ENCODE measurements at regions of chr11 and their contacts with region 1.

Region 1: GRCh38 chr11:72085621-72086351 is 5.1 kb downstream of the LRRC51 start:
- DNase-seq: no peak
- H3K4me3 ChIP-seq: no peak overlapping the region
- H3K27ac ChIP-seq: no peak overlapping the region
- H3K4me1 ChIP-seq: no peaks in the 10 kb centered on the region
- H3K27me3 ChIP-seq: no peaks in the 10 kb centered on the region
- CTCF ChIP-seq: no peak
- POLR2A ChIP-seq: no peak

Region 2: GRCh38 chr11:72024069-72024754 is 61.6 kb before region 1 on chr11:
- intact Hi-C with region 1: loop called (anchors 5 kb)
- DNase-seq: no peak
- H3K4me3 ChIP-seq: no peak overlapping the region
- H3K27ac ChIP-seq: peak overlapping the region; percentile 71 to 74
- H3K4me1 ChIP-seq: peaks cover 13 to 23% of the 10 kb centered on the region in 2 donors
- H3K27me3 ChIP-seq: no peaks in the 10 kb centered on the region
- CTCF ChIP-seq: no peak
- POLR2A ChIP-seq: no peak

Region 3: DNA sequence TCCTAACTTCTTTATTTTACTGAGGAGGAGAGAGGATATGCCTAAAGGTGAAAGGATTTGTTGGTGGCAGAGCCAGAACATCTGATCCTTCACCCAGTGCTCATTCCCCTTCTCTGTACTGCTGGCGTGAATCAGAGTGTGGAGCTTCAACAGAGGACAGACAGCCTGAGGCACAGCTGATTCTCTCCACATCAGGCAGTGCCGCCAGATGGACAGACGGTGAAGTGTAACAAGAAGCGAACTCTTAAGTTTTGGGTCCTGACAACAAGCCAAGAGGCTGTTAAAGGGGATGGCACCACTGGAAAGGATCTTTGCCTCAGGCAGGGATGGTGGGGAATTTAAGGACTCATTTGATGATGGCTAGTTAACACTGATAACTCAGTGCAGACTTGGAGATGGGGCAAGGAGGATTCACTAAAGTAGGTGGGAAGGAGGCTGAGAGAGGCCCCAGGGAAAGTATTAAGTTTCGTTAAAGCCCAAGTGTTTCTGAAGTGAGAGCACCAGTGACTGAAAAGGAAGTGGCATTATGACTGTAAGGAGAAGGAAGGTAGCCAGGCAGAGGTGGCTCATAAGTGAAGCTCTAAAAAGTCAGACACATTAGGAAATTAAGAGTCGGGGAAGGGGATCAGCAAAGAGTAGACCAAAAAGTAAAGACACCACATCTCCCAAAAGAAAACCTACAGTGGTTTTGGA is 267.2 kb after region 1 on chr11:
- intact Hi-C with region 1: no loop called
- DNase-seq: peak; percentile 27 to 59
- H3K4me3 ChIP-seq: no peak overlapping the region
- H3K27ac ChIP-seq: no peak overlapping the region
- H3K4me1 ChIP-seq: no peaks in the 10 kb centered on the region
- H3K27me3 ChIP-seq: no peaks in the 10 kb centered on the region
- CTCF ChIP-seq: peak; percentile 18 to 51 (median 28)
- POLR2A ChIP-seq: no peak

Measured in uterus (tissue), 4 donors.